ENCODE measurements at regions of chr2 and their contacts with region 1.

Region 1: GRCh38 chr2:196337208-196337953 is 166.0 kb upstream of the STK17B start:
- DNase-seq: no peak
- H3K4me3 ChIP-seq: no peak overlapping the region
- H3K27me3 ChIP-seq: no peaks in the 10 kb centered on the region
- CTCF ChIP-seq: peak; percentile 43; the same call in 1 of the 2 replicates

Region 2: DNA sequence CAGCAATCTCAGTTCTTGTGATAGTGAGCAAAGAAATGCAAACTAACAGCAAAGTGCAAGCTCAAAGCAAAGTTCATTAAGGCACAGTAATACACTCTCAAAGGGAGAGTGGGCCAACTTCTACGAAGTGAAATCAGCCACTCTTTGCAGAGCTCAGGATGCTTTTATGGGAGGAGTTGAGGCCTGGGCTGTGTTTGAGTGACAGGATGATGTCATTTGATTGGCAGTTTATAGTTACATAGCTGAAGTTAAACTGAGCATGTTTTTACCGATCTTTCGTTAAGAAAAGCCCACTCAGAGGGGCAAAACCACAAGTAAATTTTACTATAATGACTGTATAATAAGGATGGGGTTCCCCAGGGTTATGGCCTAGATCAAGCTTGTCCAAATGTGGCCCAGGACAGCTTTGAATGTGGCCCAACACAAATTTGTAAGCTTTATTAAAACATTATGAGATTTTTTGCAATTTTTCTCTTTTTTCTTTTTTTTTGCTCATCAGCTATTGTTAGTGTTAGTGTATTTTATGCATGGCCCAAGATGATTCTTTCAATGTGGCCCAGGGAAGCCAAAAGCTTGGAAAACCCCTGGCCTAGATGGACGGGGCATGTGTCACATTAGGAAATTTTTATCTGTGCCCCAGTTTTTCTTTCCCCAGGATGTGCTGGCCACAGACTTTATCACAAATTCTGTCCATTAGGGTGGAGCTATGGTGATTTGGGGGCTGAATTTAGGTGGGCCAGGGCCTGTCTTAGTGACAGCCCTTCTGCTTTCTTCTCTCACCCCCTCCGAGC is 260.4 kb before region 1 on chr2:
- CTCF ChIA-PET with region 1: interaction called, 56 read pairs
- POLR2A ChIA-PET with region 1: no interaction called
- DNase-seq: no peak
- H3K4me3 ChIP-seq: no peak overlapping the region
- H3K27me3 ChIP-seq: no peaks in the 10 kb centered on the region
- CTCF ChIP-seq: no peak

Region 3: DNA sequence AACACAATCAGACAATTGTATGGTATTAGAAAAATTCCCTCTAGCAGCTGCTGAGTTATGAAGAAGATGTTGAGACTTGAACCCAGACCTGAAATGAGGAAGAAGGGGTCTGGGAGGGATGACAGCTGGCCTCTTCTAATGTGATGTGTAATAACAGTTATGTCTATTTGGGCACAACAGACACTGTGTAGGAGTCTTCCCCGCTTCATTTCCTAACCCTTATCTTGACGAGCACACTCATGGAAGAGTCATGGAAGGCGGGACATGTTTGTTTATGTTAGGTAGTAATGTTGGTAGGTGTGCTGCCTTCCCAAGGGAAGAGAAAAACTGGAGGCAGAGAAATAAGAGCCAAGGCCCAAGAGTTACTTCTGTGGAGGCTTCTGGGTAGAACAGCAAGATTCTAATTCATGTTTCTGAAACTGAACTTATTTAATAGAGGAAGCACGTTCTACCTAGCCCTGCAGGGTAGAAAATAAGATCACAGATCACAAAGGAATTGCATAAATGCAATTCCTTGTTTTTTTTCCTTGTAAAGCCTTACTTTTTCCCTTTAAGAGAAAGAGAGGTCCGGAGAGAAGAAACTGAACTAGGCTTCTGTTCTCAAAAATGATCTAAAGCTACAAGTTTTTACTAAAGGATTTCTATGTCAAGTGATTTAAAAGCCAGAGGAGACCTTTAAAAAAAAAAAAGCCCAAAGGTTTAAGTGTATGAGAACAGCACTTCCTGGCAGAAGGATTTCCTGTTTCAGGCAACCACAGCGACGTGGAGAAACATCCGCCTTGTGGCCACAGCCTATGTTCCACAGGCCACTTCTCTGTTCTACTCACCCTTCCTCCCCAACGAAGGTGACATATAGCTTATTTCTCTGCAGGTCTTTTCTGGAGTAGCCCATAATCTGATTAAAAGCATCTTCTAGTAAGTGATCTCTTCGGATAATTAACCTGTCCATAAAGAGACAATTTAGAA is 97.5 kb before region 1 on chr2:
- CTCF ChIA-PET with region 1: no interaction called
- POLR2A ChIA-PET with region 1: no interaction called
- DNase-seq: no peak
- H3K4me3 ChIP-seq: no peak overlapping the region
- H3K27me3 ChIP-seq: no peaks in the 10 kb centered on the region
- CTCF ChIP-seq: no peak

Region 4: GRCh38 chr2:196277002-196277401 is 60.4 kb before region 1 on chr2:
- CTCF ChIA-PET with region 1: interaction called, 10 read pairs
- POLR2A ChIA-PET with region 1: no interaction called
- DNase-seq: no peak
- H3K4me3 ChIP-seq: no peak overlapping the region
- H3K27me3 ChIP-seq: no peaks in the 10 kb centered on the region
- CTCF ChIP-seq: peak; percentile 62

Region 5: DNA sequence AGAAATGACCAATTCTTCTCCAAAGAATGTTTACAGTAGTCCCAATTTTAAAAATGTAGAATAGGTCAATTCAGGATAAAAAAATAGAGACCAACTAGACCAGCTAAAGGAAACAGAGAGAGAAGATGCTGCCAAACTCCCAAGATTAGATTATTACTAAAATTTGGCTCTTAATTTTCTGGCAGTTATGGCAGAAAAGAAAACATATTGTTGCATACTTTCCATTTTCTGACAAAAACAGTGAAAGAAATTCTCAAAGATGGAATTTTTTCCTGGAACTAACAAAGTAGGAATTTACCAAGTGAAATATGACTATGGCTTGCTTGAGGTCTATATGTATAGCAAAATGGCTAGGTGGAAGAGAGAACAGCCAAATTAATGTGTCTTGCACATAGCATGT is 27.7 kb before region 1 on chr2:
- CTCF ChIA-PET with region 1: interaction called, 96 read pairs
- POLR2A ChIA-PET with region 1: no interaction called
- DNase-seq: no peak
- H3K4me3 ChIP-seq: no peak overlapping the region
- H3K27me3 ChIP-seq: no peaks in the 10 kb centered on the region
- CTCF ChIP-seq: no peak

Region 6: GRCh38 chr2:196453613-196454047 is 116.2 kb after region 1 on chr2:
- CTCF ChIA-PET with region 1: interaction called, 23 read pairs
- POLR2A ChIA-PET with region 1: no interaction called
- DNase-seq: no peak
- H3K4me3 ChIP-seq: no peak overlapping the region
- H3K27me3 ChIP-seq: no peaks in the 10 kb centered on the region
- CTCF ChIP-seq: peak; percentile 62